ENCODE measurements at regions of chr22 and their contacts with region 1.

Region 1: GRCh38 chr22:21001560-21002325 is at the start of gene THAP7:
- DNase-seq: peak; percentile 90
- ATAC-seq: peak; percentile 92
- H3K4me3 ChIP-seq: peak within 1 kb of the TSS; percentile 70 to 89 (median 86)
- H3K27ac ChIP-seq: peak within 1 kb of the TSS; percentile 94
- H3K4me1 ChIP-seq: peaks cover 30% of the 10 kb centered on the region
- H3K27me3 ChIP-seq: no peaks in the 10 kb centered on the region
- CTCF ChIP-seq: peak; percentile 12
- EP300 ChIP-seq: no peak
- POLR2A ChIP-seq: peak; percentile 83 to 85
- RAD21 ChIP-seq: no peak; the same call in 1 of the 2 replicates
- total RNA-seq, gene THAP7: 20.4 and 25.5 TPM in 2 replicates

Region 2: DNA sequence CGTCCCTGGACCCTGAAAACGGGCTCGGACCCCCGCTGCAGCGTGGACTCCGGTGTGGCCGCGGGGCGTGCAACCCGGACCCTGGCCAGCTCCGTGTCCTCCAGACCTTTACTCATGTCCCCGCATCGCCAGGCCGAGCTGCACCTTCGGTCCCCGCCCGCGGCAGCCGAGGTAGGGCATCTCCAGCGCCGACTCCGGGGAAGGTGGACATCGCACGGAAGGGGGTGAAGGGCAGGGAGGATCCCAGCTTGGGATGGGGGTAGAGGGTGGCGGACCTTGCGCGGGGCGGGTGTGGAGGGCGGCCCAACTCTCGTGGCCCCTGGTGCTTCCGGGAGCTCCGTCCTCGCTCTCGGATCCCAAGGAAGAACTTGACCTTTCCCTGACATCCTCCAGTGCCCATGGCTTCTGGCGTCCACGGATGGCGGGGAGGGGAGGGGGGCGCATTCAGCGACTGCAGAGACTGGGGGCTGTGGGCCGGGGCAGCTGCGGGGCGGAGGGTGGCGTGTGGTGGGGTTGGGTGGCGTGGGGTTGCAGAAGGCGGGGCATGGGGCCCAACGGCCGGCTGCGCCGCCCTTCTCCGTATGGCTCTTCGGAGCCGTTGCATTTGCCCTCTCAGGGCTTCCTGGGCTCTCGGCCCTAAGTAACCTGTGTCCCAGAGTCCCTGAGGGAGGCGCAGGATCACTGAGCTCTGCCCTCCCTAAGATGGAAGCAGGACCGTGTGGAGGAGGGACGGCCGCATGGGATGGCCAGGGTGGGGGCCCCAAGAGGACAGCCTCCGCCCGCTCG is 44.2 kb before region 1 on chr22:
- CTCF ChIA-PET with region 1: no interaction called
- POLR2A ChIA-PET with region 1: interaction called, 14 read pairs
- in situ Hi-C with region 1: no loop called
- intact Hi-C with region 1: loop called (anchors 2 kb)
- DNase-seq: no peak
- ATAC-seq: peak; percentile 65
- H3K4me3 ChIP-seq: peak overlapping the region; percentile 87 to 97 (median 95)
- H3K27ac ChIP-seq: peak overlapping the region; percentile 56
- H3K4me1 ChIP-seq: peaks cover 62% of the 10 kb centered on the region
- H3K27me3 ChIP-seq: no peaks in the 10 kb centered on the region; a peak in 1 of 5 replicates
- CTCF ChIP-seq: peak; percentile 19; the same call in 1 of the 2 replicates
- EP300 ChIP-seq: no peak
- POLR2A ChIP-seq: peak in 1 of 2 experiments; percentile 51; a peak in 2 of 4 replicates
- RAD21 ChIP-seq: peak; percentile 22; the same call in 1 of the 2 replicates

Region 3: DNA sequence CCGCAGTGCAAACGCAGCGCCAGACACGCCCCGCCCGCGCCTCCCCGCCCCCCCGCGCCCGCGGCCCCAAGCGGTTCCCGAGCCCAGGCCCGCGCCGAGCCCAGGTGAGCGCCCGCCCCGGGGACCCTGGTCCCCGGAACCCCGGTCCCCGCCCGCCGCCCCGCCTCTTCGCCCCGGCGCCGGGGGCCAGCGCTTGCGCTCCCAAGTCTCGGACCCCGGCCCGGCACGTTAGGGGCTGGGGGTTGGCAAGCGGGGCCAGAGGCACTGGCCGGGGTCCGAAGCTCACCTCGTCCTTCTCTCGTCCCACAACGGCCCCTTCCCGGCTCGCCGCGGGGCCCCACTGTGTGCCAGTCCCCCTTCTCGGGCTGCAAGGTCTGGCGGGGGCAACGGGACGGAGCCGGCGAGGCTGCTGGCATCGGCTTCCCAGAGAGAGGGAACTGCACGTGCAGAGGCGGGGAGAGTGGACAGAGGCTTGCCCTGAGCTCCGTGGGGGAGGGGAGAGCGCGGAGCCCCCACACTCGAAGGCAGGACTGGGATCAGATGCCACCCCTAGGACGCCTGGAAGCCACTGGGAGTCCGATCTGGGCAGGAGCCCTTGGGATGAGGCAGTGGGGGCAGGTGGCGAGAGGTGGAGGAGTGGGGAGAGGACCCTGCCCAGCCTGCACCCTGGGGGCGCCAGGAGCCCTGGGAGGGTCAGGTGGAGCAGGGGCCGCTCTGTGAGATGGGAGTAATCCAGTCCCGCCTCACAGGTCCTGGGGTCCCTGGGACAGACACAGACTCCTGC is 36.4 kb before region 1 on chr22:
- CTCF ChIA-PET with region 1: no interaction called
- POLR2A ChIA-PET with region 1: interaction called, 8 read pairs
- in situ Hi-C with region 1: no loop called
- intact Hi-C with region 1: loop called (anchors 2 kb)
- DNase-seq: no peak
- ATAC-seq: peak; percentile 10
- H3K4me3 ChIP-seq: peak overlapping the region; percentile 60 to 72 (median 64)
- H3K27ac ChIP-seq: peak overlapping the region; percentile 50
- H3K4me1 ChIP-seq: peaks cover 56% of the 10 kb centered on the region
- H3K27me3 ChIP-seq: no peaks in the 10 kb centered on the region
- CTCF ChIP-seq: 0 out of 2 replicates have a peak, but pooled peaks have one; percentile 2
- EP300 ChIP-seq: no peak
- POLR2A ChIP-seq: no peak
- RAD21 ChIP-seq: no peak; the same call in 1 of the 2 replicates

Region 4: DNA sequence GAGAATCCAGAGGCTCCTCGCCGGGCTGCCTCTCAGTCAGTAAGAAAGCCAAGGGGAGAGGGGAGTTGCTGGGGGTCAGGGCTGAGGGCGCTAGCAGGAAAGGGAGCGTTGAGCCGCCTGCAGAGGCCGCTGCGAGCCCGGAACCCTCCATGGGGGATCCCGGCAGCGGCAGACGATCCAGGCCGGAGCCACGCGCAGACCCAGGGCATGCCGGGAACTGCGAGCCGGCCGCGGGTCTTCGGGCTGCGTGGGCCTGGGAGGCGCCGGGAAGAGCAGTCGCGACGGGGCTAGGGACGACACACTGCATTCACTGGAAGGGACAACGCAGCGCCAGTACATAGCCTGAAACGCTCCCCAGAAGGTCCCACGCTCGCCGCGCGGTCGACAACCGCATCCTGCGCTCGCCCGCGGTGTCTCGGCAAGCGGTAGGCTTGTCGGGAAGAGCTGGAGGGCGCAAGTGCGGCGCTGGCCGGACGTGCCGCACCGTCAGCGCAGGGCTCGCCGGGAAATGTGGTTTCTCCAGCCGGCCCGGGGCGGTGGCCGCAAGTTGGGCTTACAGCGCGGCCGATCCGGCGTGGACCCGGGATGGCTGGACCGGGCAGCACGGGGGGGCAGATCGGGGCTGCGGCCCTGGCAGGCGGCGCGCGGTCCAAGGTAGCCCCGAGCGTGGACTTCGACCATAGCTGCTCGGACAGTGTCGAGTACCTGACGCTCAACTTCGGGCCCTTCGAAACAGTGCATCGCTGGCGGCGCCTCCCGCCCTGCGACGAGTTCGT is 19.8 kb before region 1 on chr22 and contains the start of gene LZTR1:
- CTCF ChIA-PET with region 1: no interaction called
- POLR2A ChIA-PET with region 1: interaction called, 45 read pairs
- in situ Hi-C with region 1: no loop called
- intact Hi-C with region 1: no loop called
- DNase-seq: peak; percentile 70
- ATAC-seq: peak; percentile 91
- H3K4me3 ChIP-seq: peak within 1 kb of the TSS; percentile 67 to 98 (median 83)
- H3K27ac ChIP-seq: peak within 1 kb of the TSS; percentile 80
- H3K4me1 ChIP-seq: peaks cover 39% of the 10 kb centered on the region
- H3K27me3 ChIP-seq: no peaks in the 10 kb centered on the region; a peak in 1 of 5 replicates
- CTCF ChIP-seq: peak; percentile 78
- EP300 ChIP-seq: peak in 1 of 2 experiments; percentile 13; a peak in 1 of 4 replicates
- POLR2A ChIP-seq: peak; percentile 96 to 98
- RAD21 ChIP-seq: peak; percentile 85
- total RNA-seq, gene LZTR1: 12.0 and 22.4 TPM in 2 replicates

Region 5: DNA sequence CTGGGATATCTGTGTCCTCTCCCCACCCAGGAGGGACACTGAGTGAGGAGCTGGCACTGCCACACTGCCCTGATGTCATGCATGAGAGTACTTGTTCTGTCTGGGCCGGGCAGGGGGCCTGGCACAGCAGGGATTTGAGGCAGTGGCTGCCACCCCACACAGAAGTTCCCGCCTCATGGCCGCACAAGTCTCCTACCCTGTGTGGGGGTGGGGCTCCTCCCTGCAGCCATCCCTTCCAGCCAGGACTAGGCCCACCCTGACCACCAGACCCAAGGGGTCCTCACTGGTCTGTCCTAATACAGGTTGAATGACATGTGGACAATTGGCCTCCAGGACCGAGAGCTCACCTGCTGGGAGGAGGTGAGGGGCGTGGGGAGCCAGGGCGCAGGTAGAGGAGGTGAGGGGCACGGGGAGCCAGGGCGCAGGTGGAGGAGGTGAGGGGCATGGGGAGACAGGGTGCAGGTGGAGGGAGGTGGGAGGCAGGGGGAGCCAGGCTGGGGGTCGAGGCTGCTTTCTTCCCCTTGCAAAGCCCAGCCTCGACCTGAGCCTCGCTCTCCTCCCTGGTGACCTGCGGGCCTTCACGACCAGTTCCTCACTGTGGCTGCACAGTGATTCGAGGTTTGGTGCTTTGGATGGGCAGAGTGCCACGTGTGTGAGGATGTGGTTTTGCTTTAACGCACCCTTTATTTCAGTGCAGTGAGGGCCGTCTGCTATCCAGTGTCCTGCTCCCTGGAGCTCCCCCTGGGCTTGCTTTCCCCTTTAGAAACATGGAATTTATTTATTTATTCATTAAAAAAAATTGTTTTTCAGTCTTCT is 12.2 kb before region 1 on chr22:
- CTCF ChIA-PET with region 1: no interaction called
- POLR2A ChIA-PET with region 1: interaction called, 10 read pairs
- in situ Hi-C with region 1: no loop called
- intact Hi-C with region 1: no loop called
- DNase-seq: no peak
- ATAC-seq: no peak
- H3K4me3 ChIP-seq: no peak overlapping the region
- H3K27ac ChIP-seq: no peak overlapping the region
- H3K4me1 ChIP-seq: no peaks in the 10 kb centered on the region
- H3K27me3 ChIP-seq: no peaks in the 10 kb centered on the region
- CTCF ChIP-seq: no peak
- EP300 ChIP-seq: no peak
- POLR2A ChIP-seq: no peak
- RAD21 ChIP-seq: no peak

Region 6: DNA sequence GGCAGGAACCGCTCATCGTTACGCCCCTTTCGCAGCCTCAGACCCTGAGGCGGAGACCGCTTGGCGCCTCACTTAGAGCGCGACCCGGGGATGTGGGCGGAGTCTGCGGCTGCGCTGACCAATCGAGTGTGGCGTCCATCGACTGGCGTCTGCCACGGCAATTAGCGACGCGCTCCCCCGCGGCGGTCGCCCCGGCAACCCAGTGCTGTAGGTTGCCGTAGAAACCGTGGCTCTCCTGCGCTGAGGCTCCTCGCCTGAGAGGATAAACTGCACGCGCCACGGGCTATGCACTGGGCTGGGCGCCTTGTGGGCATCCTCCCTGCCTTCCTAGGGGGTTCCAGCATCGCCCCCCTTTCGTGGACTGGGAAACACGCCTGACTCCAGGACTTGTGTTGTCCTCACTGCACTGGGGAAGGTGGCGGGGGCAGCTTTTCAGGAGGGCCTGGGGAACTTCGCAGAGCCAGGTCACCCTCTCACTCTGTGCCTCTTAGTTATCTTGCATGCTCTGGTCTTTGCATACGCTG is 12.5 kb after region 1 on chr22:
- CTCF ChIA-PET with region 1: no interaction called
- POLR2A ChIA-PET with region 1: interaction called, 31 read pairs
- in situ Hi-C with region 1: no loop called
- intact Hi-C with region 1: no loop called
- DNase-seq: no peak
- ATAC-seq: peak; percentile 24
- H3K4me3 ChIP-seq: peak overlapping the region in 2 of 3 experiments; percentile 40 to 67; a peak in 2 of 6 replicates
- H3K27ac ChIP-seq: no peak overlapping the region
- H3K4me1 ChIP-seq: peaks cover 51% of the 10 kb centered on the region
- H3K27me3 ChIP-seq: peaks cover 0 to 9% of the 10 kb centered on the region in 2 experiments; a peak in 1 of 5 replicates
- CTCF ChIP-seq: no peak
- EP300 ChIP-seq: no peak
- POLR2A ChIP-seq: no peak
- RAD21 ChIP-seq: no peak